GM18951 (cell line): ENCODE measurements at regions of chr2 and their contacts with region 1.

Region 1: GRCh38 chr2:85551698-85552678 is 9.3 kb downstream of the GGCX start:
- POLR2A ChIP-seq: no peak

Region 2: GRCh38 chr2:85420536-85421259 is 131.3 kb before region 1 on chr2:
- in situ Hi-C with region 1: loop called (anchors 5 kb)
- POLR2A ChIP-seq: no peak